ENCODE measurements at regions of chr1 and their contacts with region 1.

Region 1: GRCh38 chr1:92749024-92749634 is 35.8 kb downstream of the EVI5 start:
- DNase-seq: peak; percentile 24
- H3K4me3 ChIP-seq: no peak overlapping the region
- CTCF ChIP-seq: peak; percentile 68

Region 2: DNA sequence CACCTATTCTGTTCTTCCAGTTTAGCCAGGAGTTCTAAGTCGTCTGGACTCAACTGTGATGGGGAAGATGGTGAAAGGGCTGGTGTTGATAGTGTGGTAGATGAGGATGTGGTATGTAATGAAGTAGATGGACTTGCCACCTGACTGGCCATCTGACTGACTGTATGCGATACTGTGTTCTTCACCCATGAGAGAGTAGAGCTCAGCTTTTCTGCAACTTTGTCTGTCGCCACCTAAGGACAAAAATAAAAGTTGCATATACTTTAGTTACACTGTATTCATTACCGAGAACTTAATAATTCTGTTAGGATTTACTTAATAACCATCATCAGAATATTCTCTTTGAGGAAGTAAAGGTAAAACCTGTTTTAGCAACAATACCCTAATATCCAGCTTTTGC is 12.7 kb before region 1 on chr1:
- CTCF ChIA-PET with region 1: interaction called, 30 read pairs
- POLR2A ChIA-PET with region 1: no interaction called
- DNase-seq: no peak
- H3K4me3 ChIP-seq: no peak overlapping the region
- CTCF ChIP-seq: no peak

Region 3: GRCh38 chr1:92784639-92785500 is 35.7 kb after region 1 on chr1 and contains the start of gene EVI5:
- CTCF ChIA-PET with region 1: interaction called, 28 read pairs
- POLR2A ChIA-PET with region 1: interaction called, 3 read pairs
- DNase-seq: peak; percentile 78
- H3K4me3 ChIP-seq: peak within 1 kb of the TSS; percentile 86
- CTCF ChIP-seq: peak; percentile 10

Region 4: GRCh38 chr1:92817986-92818764 is 69.0 kb after region 1 on chr1:
- CTCF ChIA-PET with region 1: interaction called, 113 read pairs
- POLR2A ChIA-PET with region 1: no interaction called
- DNase-seq: no peak
- H3K4me3 ChIP-seq: no peak overlapping the region
- CTCF ChIP-seq: peak; percentile 70

Region 5: DNA sequence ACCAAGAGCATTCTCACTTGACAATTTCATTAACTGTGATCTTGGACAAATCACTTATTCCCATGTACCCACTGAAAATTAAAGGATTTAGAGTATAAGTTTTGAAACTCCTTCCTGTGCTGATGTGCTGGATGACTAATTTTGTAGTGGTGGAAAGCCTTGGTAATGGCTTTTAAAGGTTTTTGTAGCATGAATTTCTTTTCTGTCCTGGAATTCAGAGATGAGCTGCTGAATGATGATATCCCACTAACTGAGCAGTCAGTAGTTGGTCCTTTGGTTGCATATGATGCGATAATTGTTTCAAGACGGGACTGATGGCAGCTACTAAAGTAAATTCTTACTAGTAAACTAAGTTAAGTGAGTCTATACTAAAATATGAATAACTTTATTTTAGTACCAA is 87.9 kb after region 1 on chr1:
- CTCF ChIA-PET with region 1: interaction called, 34 read pairs
- POLR2A ChIA-PET with region 1: interaction called, 4 read pairs
- DNase-seq: no peak
- H3K4me3 ChIP-seq: no peak overlapping the region
- CTCF ChIP-seq: no peak

Measured in AG04449 (cell line).